A673 (cell line): ENCODE measurements at regions of chr5 and their contacts with region 1.

Region 1: DNA sequence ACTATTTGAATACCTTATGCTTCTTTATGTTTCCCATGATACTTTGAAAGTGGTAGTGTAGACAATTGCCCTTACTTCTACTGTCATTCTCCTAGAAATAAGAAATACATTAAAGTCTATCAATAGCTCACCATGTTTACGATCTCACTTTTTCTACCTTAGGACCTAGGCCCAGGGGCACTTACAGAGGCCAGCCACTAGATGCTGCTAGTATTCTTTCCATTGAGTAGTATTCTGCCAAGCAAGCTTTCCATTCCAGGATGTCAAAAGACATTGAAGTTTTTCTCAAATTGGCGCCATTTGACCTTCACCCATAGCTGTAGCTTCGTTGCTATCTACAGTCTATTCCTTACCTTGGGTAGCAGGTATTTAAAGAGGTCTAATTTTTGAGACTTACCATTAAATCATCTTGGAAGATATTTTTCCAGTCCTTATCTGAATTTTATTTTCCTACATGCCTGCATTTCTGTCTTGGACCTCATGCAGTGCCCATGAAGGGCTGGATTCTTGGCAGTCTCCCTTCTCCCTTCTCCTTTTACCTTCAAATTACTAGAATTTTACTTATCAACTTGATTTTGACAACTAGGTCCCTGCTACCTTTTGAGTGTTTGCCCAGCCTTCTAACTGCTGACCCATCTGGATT is 246.0 kb upstream of the NUDT12 start:
- DNase-seq: peak; percentile 80
- H3K4me3 ChIP-seq: no peak overlapping the region
- H3K27ac ChIP-seq: no peak overlapping the region
- H3K4me1 ChIP-seq: peaks cover 5% of the 10 kb centered on the region
- H3K27me3 ChIP-seq: no peaks in the 10 kb centered on the region
- CTCF ChIP-seq: peak; percentile 97

Region 2: GRCh38 chr5:103582364-103582763 is 226.2 kb before region 1 on chr5:
- CTCF ChIA-PET with region 1: no interaction called
- POLR2A ChIA-PET with region 1: no interaction called
- intact Hi-C with region 1: loop called (anchors 5 kb)
- DNase-seq: peak; percentile 71
- H3K4me3 ChIP-seq: no peak overlapping the region
- H3K27ac ChIP-seq: no peak overlapping the region
- H3K4me1 ChIP-seq: peaks cover 6% of the 10 kb centered on the region
- H3K27me3 ChIP-seq: no peaks in the 10 kb centered on the region
- CTCF ChIP-seq: peak; percentile 69

Region 3: DNA sequence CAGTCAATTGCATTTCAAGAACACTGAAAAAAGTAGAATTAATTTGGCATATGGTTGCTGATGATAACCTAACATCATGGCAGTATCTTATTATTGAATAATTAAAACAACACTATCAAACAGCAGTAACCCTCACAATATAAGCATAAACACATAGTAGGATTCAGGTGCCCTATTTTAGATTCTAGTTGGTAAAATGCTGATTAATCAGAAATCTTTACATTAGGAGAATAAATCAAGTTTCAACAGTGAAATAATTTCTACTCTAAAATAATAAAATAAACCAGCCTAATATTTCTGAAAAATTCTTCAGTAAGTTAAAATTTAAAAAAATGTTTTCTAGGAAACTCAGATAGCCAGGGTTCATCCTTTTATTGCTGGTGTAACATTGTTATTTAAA is 169.6 kb before region 1 on chr5:
- CTCF ChIA-PET with region 1: no interaction called
- POLR2A ChIA-PET with region 1: no interaction called
- intact Hi-C with region 1: no loop called
- DNase-seq: no peak
- H3K4me3 ChIP-seq: no peak overlapping the region
- H3K27ac ChIP-seq: no peak overlapping the region
- H3K4me1 ChIP-seq: no peaks in the 10 kb centered on the region
- H3K27me3 ChIP-seq: no peaks in the 10 kb centered on the region
- CTCF ChIP-seq: no peak

Region 4: DNA sequence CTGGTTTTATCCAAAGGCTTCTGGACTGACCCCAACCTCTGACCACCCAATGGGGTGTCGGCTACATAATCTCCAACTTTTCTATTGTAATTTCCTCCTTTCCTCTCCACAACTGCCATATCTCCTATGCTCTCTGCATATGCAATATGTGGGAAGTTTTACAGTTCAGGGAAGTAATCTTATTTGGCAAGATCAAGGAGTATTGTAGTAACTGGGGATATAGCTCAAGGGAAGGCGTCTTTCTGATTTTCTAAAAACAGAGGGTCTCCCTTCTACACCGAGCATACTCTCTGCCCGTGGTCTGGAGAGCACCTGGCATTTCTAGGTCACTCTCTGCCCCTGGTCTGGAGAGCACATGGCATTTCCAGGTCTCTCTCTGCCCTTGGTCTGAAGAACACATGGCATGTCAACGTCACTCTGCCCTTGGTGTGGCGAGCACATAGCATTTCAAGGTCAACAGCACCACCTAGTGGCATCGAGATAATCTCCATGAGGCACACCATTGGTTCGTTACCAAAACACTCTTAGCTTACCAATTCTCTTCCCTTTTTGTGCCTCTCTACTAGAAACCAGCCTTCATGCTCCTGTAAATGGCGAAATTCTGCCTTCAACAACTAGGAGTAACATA is 370.4 kb after region 1 on chr5:
- CTCF ChIA-PET with region 1: interaction called, 6 read pairs
- POLR2A ChIA-PET with region 1: no interaction called
- intact Hi-C with region 1: loop called (anchors 1 kb)
- DNase-seq: peak; percentile 66
- H3K4me3 ChIP-seq: no peak overlapping the region
- H3K27ac ChIP-seq: no peak overlapping the region
- H3K4me1 ChIP-seq: peaks cover 4% of the 10 kb centered on the region
- H3K27me3 ChIP-seq: no peaks in the 10 kb centered on the region
- CTCF ChIP-seq: peak; percentile 50

Region 5: GRCh38 chr5:104347119-104347708 is 538.6 kb after region 1 on chr5:
- CTCF ChIA-PET with region 1: no interaction called
- POLR2A ChIA-PET with region 1: no interaction called
- intact Hi-C with region 1: loop called (anchors 2 kb)
- DNase-seq: peak; percentile 74
- H3K4me3 ChIP-seq: no peak overlapping the region
- H3K27ac ChIP-seq: no peak overlapping the region
- H3K4me1 ChIP-seq: peaks cover 25% of the 10 kb centered on the region
- H3K27me3 ChIP-seq: no peaks in the 10 kb centered on the region
- CTCF ChIP-seq: peak; percentile 57